ENCODE measurements at regions of chr1 and their contacts with region 1.

Region 1: GRCh38 chr1:86833461-86834215 is 80.3 kb downstream of the SELENOF start:
- DNase-seq: peak; percentile 88
- ATAC-seq: peak; percentile 98
- H3K4me3 ChIP-seq: no peak overlapping the region
- H3K27ac ChIP-seq: no peak overlapping the region
- H3K4me1 ChIP-seq: peaks cover 20% of the 10 kb centered on the region
- H3K27me3 ChIP-seq: no peaks in the 10 kb centered on the region
- CTCF ChIP-seq: peak; percentile 85
- EP300 ChIP-seq: no peak
- POLR2A ChIP-seq: no peak
- RAD21 ChIP-seq: peak; percentile 84

Region 2: GRCh38 chr1:86798608-86799291 is 34.9 kb before region 1 on chr1:
- CTCF ChIA-PET with region 1: no interaction called
- POLR2A ChIA-PET with region 1: no interaction called
- in situ Hi-C with region 1: no loop called
- intact Hi-C with region 1: no loop called
- DNase-seq: no peak
- ATAC-seq: peak; percentile 49; the same call in 2 of the 3 replicates
- H3K4me3 ChIP-seq: no peak overlapping the region
- H3K27ac ChIP-seq: no peak overlapping the region
- H3K4me1 ChIP-seq: peaks cover 26% of the 10 kb centered on the region
- H3K27me3 ChIP-seq: no peaks in the 10 kb centered on the region
- CTCF ChIP-seq: no peak
- EP300 ChIP-seq: no peak
- POLR2A ChIP-seq: no peak
- RAD21 ChIP-seq: no peak

Region 3: DNA sequence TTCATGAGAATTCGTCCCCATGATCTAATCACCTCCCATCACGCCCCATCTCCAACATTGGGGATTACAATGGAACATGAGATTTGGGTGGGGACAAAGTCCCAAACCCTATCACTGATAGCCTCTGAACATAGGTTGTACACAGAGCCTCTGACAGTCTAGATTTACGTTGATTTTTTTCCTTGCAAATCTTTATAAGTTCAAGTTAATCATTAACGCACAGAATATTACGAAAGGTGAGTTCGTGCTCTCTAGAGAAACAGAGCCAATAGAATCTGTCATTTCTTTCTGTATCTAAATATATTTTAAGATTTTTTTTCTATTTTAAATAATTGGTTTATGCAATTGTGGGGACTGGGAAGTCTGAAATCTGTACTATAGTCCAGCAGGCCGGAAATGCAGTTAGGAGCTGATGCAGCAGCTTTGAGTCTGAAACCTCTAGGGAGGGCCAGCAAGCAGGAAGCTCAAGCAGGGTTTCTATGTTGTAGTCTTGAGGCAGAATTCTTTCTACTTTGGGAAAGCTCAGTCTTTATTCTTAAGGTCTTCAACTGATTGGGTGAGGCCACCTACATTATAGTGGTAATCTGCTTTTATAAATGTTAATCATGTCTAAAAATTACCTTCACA is 19.3 kb after region 1 on chr1:
- CTCF ChIA-PET with region 1: no interaction called
- POLR2A ChIA-PET with region 1: no interaction called
- in situ Hi-C with region 1: no loop called
- intact Hi-C with region 1: no loop called
- DNase-seq: peak; percentile 59
- ATAC-seq: peak; percentile 76
- H3K4me3 ChIP-seq: no peak overlapping the region
- H3K27ac ChIP-seq: no peak overlapping the region
- H3K4me1 ChIP-seq: peaks cover 13% of the 10 kb centered on the region
- H3K27me3 ChIP-seq: no peaks in the 10 kb centered on the region
- CTCF ChIP-seq: no peak
- EP300 ChIP-seq: no peak
- POLR2A ChIP-seq: no peak
- RAD21 ChIP-seq: no peak

Region 4: GRCh38 chr1:86865973-86866637 is 32.5 kb after region 1 on chr1:
- CTCF ChIA-PET with region 1: no interaction called
- POLR2A ChIA-PET with region 1: no interaction called
- in situ Hi-C with region 1: no loop called
- intact Hi-C with region 1: no loop called
- DNase-seq: no peak
- ATAC-seq: no peak
- H3K4me3 ChIP-seq: no peak overlapping the region
- H3K27ac ChIP-seq: no peak overlapping the region
- H3K4me1 ChIP-seq: peaks cover 5% of the 10 kb centered on the region
- H3K27me3 ChIP-seq: no peaks in the 10 kb centered on the region
- CTCF ChIP-seq: no peak
- EP300 ChIP-seq: no peak
- POLR2A ChIP-seq: no peak
- RAD21 ChIP-seq: no peak

Region 5: GRCh38 chr1:86950712-86951419 is 117.2 kb after region 1 on chr1:
- CTCF ChIA-PET with region 1: no interaction called
- POLR2A ChIA-PET with region 1: no interaction called
- in situ Hi-C with region 1: loop called (anchors 10 kb)
- intact Hi-C with region 1: no loop called
- DNase-seq: no peak
- ATAC-seq: no peak
- H3K4me3 ChIP-seq: no peak overlapping the region
- H3K27ac ChIP-seq: no peak overlapping the region
- H3K4me1 ChIP-seq: no peaks in the 10 kb centered on the region; the same call in 1 of the 2 replicates
- H3K27me3 ChIP-seq: no peaks in the 10 kb centered on the region
- CTCF ChIP-seq: no peak
- EP300 ChIP-seq: no peak
- POLR2A ChIP-seq: no peak
- RAD21 ChIP-seq: no peak

Region 6: DNA sequence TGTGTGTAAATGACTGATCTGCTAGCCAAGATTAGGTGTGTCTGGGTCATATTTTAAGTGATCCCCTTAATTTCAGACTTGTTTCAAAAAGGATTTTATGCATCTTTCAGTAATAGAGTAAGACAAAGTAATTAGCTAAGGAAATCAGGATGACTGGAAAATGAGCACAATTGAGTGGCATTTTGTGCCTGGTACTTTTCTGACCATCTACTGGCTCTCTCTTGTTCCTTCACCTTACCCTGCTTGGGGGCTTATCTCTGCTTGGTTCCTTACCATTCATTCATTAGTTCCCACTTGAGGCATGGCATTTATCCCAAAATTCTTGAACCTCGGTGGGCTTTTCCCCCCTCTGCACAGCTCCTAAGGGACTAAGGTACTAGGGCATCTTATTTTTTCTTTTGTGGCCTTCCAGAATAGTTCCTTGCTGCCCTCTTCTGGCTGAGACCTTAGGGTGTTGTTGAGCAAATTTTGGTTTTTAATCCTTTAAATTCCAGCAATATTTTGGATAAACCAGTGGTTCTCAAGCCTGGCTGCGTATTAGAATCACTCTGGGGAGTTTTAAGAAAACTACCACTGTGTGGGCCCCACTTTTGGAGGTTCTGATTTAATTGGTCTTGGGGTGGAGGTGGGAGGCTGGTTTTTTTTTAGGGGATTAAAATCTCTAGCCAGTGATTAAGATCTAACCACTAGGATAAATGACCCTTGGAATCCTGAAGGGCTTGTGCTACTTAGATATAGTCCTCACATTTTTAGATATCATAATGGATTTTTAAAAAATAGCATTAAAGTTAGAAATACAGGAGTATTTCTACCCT is 131.6 kb after region 1 on chr1:
- CTCF ChIA-PET with region 1: interaction called, 13 read pairs
- POLR2A ChIA-PET with region 1: no interaction called
- in situ Hi-C with region 1: no loop called
- intact Hi-C with region 1: loop called (anchors 1 kb)
- DNase-seq: peak; percentile 46
- ATAC-seq: peak; percentile 73
- H3K4me3 ChIP-seq: no peak overlapping the region
- H3K27ac ChIP-seq: no peak overlapping the region
- H3K4me1 ChIP-seq: peaks cover 19% of the 10 kb centered on the region
- H3K27me3 ChIP-seq: no peaks in the 10 kb centered on the region
- CTCF ChIP-seq: peak; percentile 66
- EP300 ChIP-seq: no peak
- POLR2A ChIP-seq: no peak
- RAD21 ChIP-seq: peak; percentile 67

Region 7: DNA sequence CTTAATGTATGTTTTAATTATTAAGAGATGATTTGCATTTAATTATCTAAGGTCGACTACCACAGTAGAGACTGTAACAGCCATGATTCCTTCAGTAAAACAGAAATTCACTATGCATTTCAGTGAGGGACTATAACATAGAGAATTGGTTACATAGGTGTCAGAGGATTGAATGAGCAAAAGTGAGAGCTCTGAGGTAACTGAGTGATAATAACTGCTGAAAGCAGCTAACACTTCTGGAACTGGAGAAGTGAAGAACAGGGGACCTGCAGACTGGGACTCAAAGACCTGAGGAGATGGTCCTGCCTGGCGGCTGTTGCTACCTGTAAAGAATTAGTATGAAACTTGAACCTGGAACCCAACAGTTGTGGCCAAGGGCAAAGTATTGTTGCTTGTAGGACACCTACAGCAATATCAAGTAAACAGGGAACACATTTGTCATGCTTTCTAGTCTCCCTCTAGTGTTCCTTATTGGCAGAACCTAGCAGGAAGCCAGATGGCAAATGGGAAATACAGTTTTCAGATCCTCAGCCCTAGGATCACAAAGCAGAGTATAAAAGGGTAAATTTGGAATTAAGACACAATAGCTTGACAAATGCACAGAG is 191.4 kb after region 1 on chr1:
- CTCF ChIA-PET with region 1: interaction called, 3 read pairs
- POLR2A ChIA-PET with region 1: no interaction called
- in situ Hi-C with region 1: no loop called
- intact Hi-C with region 1: loop called (anchors 1 kb)
- DNase-seq: peak; percentile 58
- ATAC-seq: peak; percentile 95
- H3K4me3 ChIP-seq: no peak overlapping the region
- H3K27ac ChIP-seq: peak overlapping the region; percentile 11
- H3K4me1 ChIP-seq: peaks cover 16% of the 10 kb centered on the region
- H3K27me3 ChIP-seq: no peaks in the 10 kb centered on the region
- CTCF ChIP-seq: peak; percentile 78
- EP300 ChIP-seq: no peak
- POLR2A ChIP-seq: no peak
- RAD21 ChIP-seq: no peak

Region 8: GRCh38 chr1:87084244-87084836 is 250.7 kb after region 1 on chr1:
- CTCF ChIA-PET with region 1: interaction called, 14 read pairs
- POLR2A ChIA-PET with region 1: no interaction called
- in situ Hi-C with region 1: loop called (anchors 10 kb)
- intact Hi-C with region 1: loop called (anchors 1 kb)
- DNase-seq: peak; percentile 4
- ATAC-seq: no peak
- H3K4me3 ChIP-seq: no peak overlapping the region
- H3K27ac ChIP-seq: no peak overlapping the region
- H3K4me1 ChIP-seq: no peaks in the 10 kb centered on the region
- H3K27me3 ChIP-seq: no peaks in the 10 kb centered on the region
- CTCF ChIP-seq: peak; percentile 32; the same call in 1 of the 2 replicates
- EP300 ChIP-seq: no peak
- POLR2A ChIP-seq: no peak
- RAD21 ChIP-seq: no peak

Region 9: DNA sequence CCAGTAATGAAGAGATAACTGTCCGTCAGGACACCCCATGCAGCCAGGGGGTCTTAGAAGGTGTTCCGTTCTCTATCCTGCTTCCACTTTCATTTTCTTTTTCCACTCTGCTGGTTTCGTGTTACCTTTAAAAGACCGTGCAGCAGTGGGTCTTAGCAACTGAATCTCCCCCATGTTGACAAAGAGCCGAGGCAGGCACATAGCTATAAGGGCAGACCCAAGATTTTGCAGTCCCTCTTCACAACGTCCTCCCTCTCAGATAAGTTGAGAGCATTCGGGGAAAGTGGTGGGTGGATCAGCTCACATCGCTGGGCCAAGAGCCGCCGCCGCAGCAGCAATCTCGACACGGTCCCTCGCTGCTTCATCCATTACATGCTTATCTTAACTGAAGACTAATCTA is 850.6 kb after region 1 on chr1:
- CTCF ChIA-PET with region 1: no interaction called
- POLR2A ChIA-PET with region 1: no interaction called
- in situ Hi-C with region 1: no loop called
- intact Hi-C with region 1: no loop called
- DNase-seq: no peak
- ATAC-seq: peak; percentile 75
- H3K4me3 ChIP-seq: peak overlapping the region; percentile 48 to 65 (median 56); a peak in 5 of 6 replicates
- H3K27ac ChIP-seq: no peak overlapping the region
- H3K4me1 ChIP-seq: peaks cover 7% of the 10 kb centered on the region
- H3K27me3 ChIP-seq: no peaks in the 10 kb centered on the region; a peak in 1 of 5 replicates
- CTCF ChIP-seq: no peak
- EP300 ChIP-seq: no peak
- POLR2A ChIP-seq: no peak
- RAD21 ChIP-seq: no peak